Aorta (tissue), 5 donors: ENCODE measurements at regions of chr11 and their contacts with region 1.

Region 1: DNA sequence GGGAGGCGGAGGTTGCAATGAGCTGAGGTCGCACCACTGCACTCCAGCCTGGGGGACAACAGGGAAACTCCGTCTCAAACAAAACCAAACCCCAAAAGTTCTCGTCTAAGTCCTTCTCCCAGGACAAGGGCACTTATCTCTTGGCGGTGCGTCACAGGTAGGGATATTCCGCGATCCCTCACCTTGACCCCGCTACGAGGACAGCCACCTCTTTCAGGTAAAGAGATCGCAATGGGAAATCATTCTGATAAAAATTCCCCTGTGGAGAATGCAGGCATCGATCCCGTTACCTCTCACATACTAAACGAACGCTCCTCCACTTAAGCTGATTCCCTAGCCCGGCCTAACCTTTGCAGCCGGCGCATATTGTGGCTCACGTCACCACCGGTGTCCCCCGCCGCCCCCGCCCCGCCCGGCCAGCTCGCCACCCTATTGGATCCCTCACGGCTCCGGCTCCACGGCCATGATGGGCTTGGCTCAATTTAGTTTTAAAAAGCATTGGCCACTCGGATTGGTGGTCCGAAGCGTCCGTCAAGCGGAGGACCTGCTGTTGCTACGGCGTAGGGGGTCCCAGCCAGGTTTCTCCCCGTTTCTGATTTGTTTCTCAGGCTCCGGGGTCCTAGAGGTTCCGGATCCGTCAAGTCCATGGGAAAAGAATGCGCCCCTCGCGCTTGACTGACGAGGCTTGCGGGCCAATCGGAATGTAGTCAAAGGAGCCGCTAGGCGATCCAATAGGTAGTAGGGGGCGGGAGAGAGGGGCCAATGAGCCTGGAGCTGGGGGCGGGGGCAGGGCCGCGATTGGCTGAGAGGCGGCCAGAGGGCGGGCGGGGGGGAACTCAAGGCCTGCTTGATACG is 439 bp upstream of the PPP6R3 start:
- DNase-seq: peak; percentile 98
- ATAC-seq: peak; percentile 97
- H3K4me3 ChIP-seq: peak overlapping the region; percentile 98 to 99
- H3K27ac ChIP-seq: peak overlapping the region; percentile 77 to 99
- H3K4me1 ChIP-seq: peaks cover 0 to under 1% of the 10 kb centered on the region in 2 donors
- H3K27me3 ChIP-seq: no peaks in the 10 kb centered on the region

Region 2: DNA sequence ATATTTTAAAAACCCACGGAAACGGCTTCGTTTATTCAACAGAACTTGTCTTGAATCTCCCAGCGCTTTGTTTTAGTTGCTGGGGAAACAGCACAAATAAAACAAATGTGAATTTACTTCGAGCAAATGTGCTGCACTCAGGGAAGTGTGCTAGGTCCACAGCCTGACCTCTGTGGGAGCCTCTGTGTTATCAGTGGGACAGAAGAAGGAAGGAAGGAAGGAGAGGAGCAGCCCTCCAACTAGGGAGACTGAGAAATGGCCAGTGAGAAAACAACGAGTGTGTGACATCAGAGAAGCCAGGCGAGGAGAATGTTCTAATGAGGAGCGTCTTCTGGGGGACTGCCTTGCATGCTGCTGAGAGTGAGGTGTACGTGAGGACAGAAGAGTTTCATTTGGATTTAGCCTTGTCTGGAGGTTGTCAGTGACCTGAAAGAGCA is 43.2 kb after region 1 on chr11:
- intact Hi-C with region 1: loop called in 1 of 2 experiments (anchors 5 kb)
- DNase-seq: no peak
- ATAC-seq: peak; percentile 41
- H3K4me3 ChIP-seq: no peak overlapping the region
- H3K27ac ChIP-seq: no peak overlapping the region
- H3K4me1 ChIP-seq: peaks cover 6 to 17% of the 10 kb centered on the region in 2 donors
- H3K27me3 ChIP-seq: no peaks in the 10 kb centered on the region

Region 3: DNA sequence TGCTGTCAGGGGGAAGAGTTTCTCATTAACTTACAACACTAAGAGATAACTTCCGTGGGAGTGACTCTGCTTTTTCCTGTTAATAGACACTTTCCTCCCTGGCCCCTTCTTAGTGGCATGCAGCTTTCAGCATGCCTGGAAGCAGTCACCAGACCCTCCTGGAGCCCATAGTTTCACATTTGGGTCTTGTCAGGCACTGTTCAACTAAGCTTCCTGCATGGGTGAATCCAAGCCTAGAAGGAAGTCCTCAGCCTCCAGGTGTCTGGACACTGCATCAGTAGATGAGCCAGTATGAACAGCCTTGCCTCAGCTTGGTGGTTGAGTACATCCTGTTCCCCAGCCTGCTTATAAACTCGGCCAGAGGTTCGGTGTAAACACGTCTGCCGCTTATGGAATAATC is 68.5 kb after region 1 on chr11:
- intact Hi-C with region 1: loop called in 1 of 2 experiments (anchors 5 kb)
- DNase-seq: no peak
- ATAC-seq: no peak
- H3K4me3 ChIP-seq: no peak overlapping the region
- H3K27ac ChIP-seq: no peak overlapping the region
- H3K4me1 ChIP-seq: peaks cover 2 to 3% of the 10 kb centered on the region in 2 donors
- H3K27me3 ChIP-seq: no peaks in the 10 kb centered on the region

Region 4: GRCh38 chr11:68574308-68574707 is 114.2 kb after region 1 on chr11:
- intact Hi-C with region 1: loop called in 1 of 2 experiments (anchors 10 kb)
- DNase-seq: no peak
- ATAC-seq: no peak
- H3K4me3 ChIP-seq: no peak overlapping the region
- H3K27ac ChIP-seq: no peak overlapping the region
- H3K4me1 ChIP-seq: peaks cover 0 to 1% of the 10 kb centered on the region in 2 donors
- H3K27me3 ChIP-seq: no peaks in the 10 kb centered on the region

Region 5: GRCh38 chr11:68617925-68618809 is 158.1 kb after region 1 on chr11:
- intact Hi-C with region 1: no loop called
- DNase-seq: no peak
- ATAC-seq: peak; percentile 52
- H3K4me3 ChIP-seq: no peak overlapping the region
- H3K27ac ChIP-seq: no peak overlapping the region
- H3K4me1 ChIP-seq: no peaks in the 10 kb centered on the region
- H3K27me3 ChIP-seq: no peaks in the 10 kb centered on the region

Region 6: DNA sequence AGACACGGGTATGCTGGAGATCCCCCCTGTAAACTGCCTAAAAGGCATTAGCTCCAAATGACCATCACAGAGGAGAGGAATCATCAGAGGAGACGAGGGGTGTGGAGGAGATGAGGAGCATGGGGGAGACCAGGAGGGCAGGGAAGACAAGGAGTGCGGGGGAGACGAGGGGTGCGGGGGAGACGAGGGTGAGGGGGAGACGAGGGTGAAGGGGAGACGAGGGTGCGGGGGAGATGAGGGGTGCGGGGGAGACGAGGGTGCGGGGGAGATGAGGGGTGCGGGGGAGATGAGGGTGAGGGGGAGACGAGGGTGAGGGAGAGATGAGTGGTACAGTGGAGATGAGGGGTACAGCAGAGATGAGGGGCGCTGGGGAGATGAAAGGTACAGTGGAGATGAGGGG is 206.7 kb after region 1 on chr11:
- intact Hi-C with region 1: no loop called
- DNase-seq: no peak
- ATAC-seq: no peak
- H3K4me3 ChIP-seq: no peak overlapping the region
- H3K27ac ChIP-seq: no peak overlapping the region
- H3K4me1 ChIP-seq: no peaks in the 10 kb centered on the region
- H3K27me3 ChIP-seq: no peaks in the 10 kb centered on the region